ENCODE measurements at regions of chr4 and their contacts with region 1.

Region 1: DNA sequence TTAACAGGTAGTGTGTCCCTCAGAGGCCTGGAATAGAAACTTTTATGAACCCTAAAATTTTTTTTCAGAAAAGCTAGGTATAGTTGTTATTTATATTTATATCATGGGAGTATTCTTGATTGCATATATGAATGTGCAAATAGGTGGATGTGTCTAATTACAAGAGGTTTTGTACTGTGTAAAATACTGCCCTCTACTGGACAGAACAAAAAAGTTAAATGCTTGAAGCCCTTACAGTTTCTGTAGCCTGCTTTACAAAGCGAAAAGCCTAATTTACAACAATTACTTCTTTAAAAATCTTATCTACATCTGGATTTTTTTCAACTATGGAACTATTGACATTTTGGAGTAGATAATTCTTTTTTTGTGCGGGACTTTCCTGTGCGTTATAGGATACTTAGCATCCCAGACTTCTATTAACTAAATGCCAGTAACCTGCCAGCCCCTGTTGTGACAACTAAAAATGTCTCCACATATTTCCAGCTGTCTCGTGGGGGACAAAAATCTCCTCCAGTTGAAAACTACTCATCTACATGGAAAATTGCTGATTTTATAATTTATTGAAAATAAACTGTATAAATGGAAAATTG is 35.1 kb downstream of the ENPEP start:
- DNase-seq: no peak
- ATAC-seq: peak; percentile 73

Region 2: DNA sequence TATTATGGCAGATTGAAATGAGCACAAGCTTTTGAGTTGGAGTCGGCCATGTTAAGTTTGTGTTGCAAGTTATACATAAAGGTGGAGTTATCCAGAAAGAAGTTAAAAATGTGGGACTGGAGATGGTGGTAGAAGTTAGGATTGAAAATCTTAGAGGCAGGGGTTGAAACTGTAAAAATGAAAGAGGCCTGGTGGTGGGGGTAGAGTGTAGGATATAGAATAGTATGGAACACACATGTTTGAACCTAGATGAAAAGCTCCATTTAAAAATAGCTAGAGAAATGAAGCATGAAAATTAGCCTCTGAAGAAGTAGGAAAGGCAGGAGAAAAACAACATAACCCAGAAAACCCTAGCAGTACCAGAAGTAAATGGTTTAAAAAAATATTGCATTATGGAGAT is 166.9 kb before region 1 on chr4:
- intact Hi-C with region 1: loop called (anchors 5 kb)
- DNase-seq: no peak
- ATAC-seq: peak; percentile 59

Region 3: GRCh38 chr4:110597582-110597981 is 86.5 kb after region 1 on chr4:
- intact Hi-C with region 1: no loop called
- DNase-seq: no peak
- ATAC-seq: no peak

Measured in Right ventricle myocardium superior (tissue), 1 donor.